Breast epithelium (tissue), 4 donors: ENCODE measurements at regions of chr5 and their contacts with region 1.

Region 1: DNA sequence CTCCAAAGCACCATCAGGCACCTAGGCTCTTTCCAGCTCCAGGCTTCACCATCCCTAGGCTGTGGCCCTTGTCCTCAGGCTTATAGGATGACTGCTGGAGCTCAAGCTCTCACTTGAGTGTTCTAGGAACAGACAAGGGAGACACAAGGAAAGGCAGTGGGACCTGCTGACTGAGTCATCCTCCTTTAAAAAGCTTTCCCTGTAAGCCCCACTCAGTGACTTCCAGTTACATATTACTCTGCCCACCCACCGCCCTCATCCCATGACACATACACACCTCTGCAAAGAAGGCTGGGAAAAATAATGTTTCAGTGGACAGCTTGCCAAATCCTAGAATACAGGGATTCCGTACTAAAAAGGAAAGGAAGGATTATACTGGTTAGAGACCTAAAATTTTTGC is 154.2 kb upstream of the ZNF366 start:
- DNase-seq: no peak
- H3K4me3 ChIP-seq: no peak overlapping the region
- H3K27ac ChIP-seq: no peak overlapping the region
- H3K4me1 ChIP-seq: no peaks in the 10 kb centered on the region
- H3K27me3 ChIP-seq: no peaks in the 10 kb centered on the region
- CTCF ChIP-seq: no peak
- POLR2A ChIP-seq: no peak

Region 2: GRCh38 chr5:72531496-72532190 is 129.8 kb before region 1 on chr5:
- intact Hi-C with region 1: loop called (anchors 5 kb)
- DNase-seq: no peak
- H3K4me3 ChIP-seq: no peak overlapping the region
- H3K27ac ChIP-seq: peak overlapping the region; percentile 59 to 72
- H3K4me1 ChIP-seq: no peaks in the 10 kb centered on the region
- H3K27me3 ChIP-seq: no peaks in the 10 kb centered on the region
- CTCF ChIP-seq: peak in 1 of 3 donors; percentile 24
- POLR2A ChIP-seq: no peak

Region 3: GRCh38 chr5:72645064-72645846 is 16.1 kb before region 1 on chr5:
- intact Hi-C with region 1: loop called (anchors 1 kb)
- DNase-seq: no peak
- H3K4me3 ChIP-seq: no peak overlapping the region
- H3K27ac ChIP-seq: no peak overlapping the region
- H3K4me1 ChIP-seq: no peaks in the 10 kb centered on the region
- H3K27me3 ChIP-seq: no peaks in the 10 kb centered on the region
- CTCF ChIP-seq: no peak
- POLR2A ChIP-seq: no peak

Region 4: DNA sequence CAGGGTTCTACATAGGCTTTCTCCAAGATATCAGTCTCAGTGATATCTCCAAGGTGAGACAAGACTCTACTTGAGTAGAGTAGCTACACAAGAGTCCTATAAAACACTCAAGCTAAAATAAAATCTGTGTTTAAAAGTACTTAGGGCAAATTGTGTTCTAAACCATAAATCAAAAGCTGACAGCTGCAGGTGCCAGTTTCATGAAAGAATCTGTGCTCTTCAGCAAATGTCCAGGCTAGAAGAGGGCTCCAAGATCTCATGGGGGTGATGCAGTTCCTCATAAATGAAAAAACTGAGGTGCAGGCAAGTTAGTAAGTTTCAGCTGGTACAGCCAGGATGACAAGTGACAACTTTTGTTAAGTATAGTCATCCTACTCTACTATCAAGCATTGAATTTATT is 12.2 kb after region 1 on chr5:
- intact Hi-C with region 1: no loop called
- DNase-seq: no peak
- H3K4me3 ChIP-seq: no peak overlapping the region
- H3K27ac ChIP-seq: no peak overlapping the region
- H3K4me1 ChIP-seq: no peaks in the 10 kb centered on the region
- H3K27me3 ChIP-seq: no peaks in the 10 kb centered on the region
- CTCF ChIP-seq: no peak
- POLR2A ChIP-seq: no peak

Region 5: GRCh38 chr5:72702871-72703434 is 41.5 kb after region 1 on chr5:
- intact Hi-C with region 1: no loop called
- DNase-seq: no peak
- H3K4me3 ChIP-seq: no peak overlapping the region
- H3K27ac ChIP-seq: no peak overlapping the region
- H3K4me1 ChIP-seq: no peaks in the 10 kb centered on the region
- H3K27me3 ChIP-seq: no peaks in the 10 kb centered on the region
- CTCF ChIP-seq: no peak
- POLR2A ChIP-seq: no peak